Activated CD4-positive, alpha-beta T cell treated with anti-CD3 and anti-CD28 coated beads for 36 hours (primary cell): ENCODE measurements at regions of chr9 and their contacts with region 1.

Region 1: GRCh38 chr9:5450359-5451091 is at the start of gene CD274:
- DNase-seq: peak; percentile 94
- ATAC-seq: peak; percentile 66
- H3K4me3 Mint-ChIP-seq: peak within 1 kb of the TSS; percentile 98
- H3K27ac Mint-ChIP-seq: peak within 1 kb of the TSS; percentile 90
- H3K4me1 Mint-ChIP-seq: peaks cover 77% of the 10 kb centered on the region
- H3K27me3 Mint-ChIP-seq: no peaks in the 10 kb centered on the region
- total RNA-seq, gene CD274: 25.0 to 30.1 TPM

Region 2: GRCh38 chr9:4832786-4833579 is 617.5 kb before region 1 on chr9:
- CTCF ChIA-PET with region 1: no interaction called
- POLR2A ChIA-PET with region 1: no interaction called
- intact Hi-C with region 1: loop called in 1 of 2 experiments (anchors 2 kb)
- DNase-seq: peak; percentile 81
- ATAC-seq: peak; percentile 94
- H3K4me3 Mint-ChIP-seq: peak overlapping the region; percentile 16
- H3K27ac Mint-ChIP-seq: peak overlapping the region; percentile 84
- H3K4me1 Mint-ChIP-seq: peaks cover 45% of the 10 kb centered on the region
- H3K27me3 Mint-ChIP-seq: no peaks in the 10 kb centered on the region

Region 3: GRCh38 chr9:5364294-5365024 is 86.1 kb before region 1 on chr9:
- CTCF ChIA-PET with region 1: no interaction called
- POLR2A ChIA-PET with region 1: no interaction called
- intact Hi-C with region 1: no loop called
- DNase-seq: no peak
- ATAC-seq: peak; percentile 97
- H3K4me3 Mint-ChIP-seq: no peak overlapping the region
- H3K27ac Mint-ChIP-seq: peak overlapping the region; percentile 44
- H3K4me1 Mint-ChIP-seq: peaks cover 17% of the 10 kb centered on the region
- H3K27me3 Mint-ChIP-seq: no peaks in the 10 kb centered on the region

Region 4: GRCh38 chr9:5510360-5510931 is 59.9 kb after region 1 on chr9 and contains the start of gene PDCD1LG2:
- CTCF ChIA-PET with region 1: interaction called, 4 read pairs
- POLR2A ChIA-PET with region 1: no interaction called
- intact Hi-C with region 1: loop called in 1 of 2 experiments (anchors 2 kb)
- DNase-seq: peak; percentile 78
- ATAC-seq: peak; percentile 92
- H3K4me3 Mint-ChIP-seq: peak within 1 kb of the TSS; percentile 64
- H3K27ac Mint-ChIP-seq: peak within 1 kb of the TSS; percentile 89
- H3K4me1 Mint-ChIP-seq: peaks cover 50% of the 10 kb centered on the region
- H3K27me3 Mint-ChIP-seq: no peaks in the 10 kb centered on the region
- total RNA-seq, gene PDCD1LG2: 0.43 to 0.81 TPM

Region 5: DNA sequence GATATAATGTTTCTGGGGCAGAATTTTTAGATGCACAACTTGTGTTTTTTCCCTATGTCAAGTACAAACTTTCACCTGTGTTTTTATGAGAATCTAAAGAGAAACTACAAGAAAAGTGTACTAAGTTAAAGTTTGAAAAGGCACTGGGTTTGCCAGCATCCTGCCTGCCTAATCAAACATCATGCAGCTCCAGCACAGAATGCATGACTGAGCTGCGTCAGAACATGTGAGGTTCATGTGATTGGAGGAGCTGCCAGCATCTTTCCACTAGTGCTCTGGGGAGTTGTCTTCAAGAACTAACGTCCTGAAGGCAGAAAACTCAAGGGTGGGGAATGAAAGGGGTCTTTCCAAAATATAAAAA is 132.3 kb after region 1 on chr9:
- CTCF ChIA-PET with region 1: interaction called, 18 read pairs
- POLR2A ChIA-PET with region 1: interaction called, 4 read pairs
- intact Hi-C with region 1: loop called in 1 of 2 experiments (anchors 2 kb)
- DNase-seq: peak; percentile 69
- ATAC-seq: peak; percentile 42
- H3K4me3 Mint-ChIP-seq: no peak overlapping the region
- H3K27ac Mint-ChIP-seq: peak overlapping the region; percentile 85
- H3K4me1 Mint-ChIP-seq: peaks cover 74% of the 10 kb centered on the region
- H3K27me3 Mint-ChIP-seq: no peaks in the 10 kb centered on the region

Region 6: GRCh38 chr9:5843794-5844504 is 393.4 kb after region 1 on chr9:
- CTCF ChIA-PET with region 1: no interaction called
- POLR2A ChIA-PET with region 1: no interaction called
- intact Hi-C with region 1: loop called (anchors 5 to 10 kb)
- DNase-seq: no peak
- ATAC-seq: no peak
- H3K4me3 Mint-ChIP-seq: peak overlapping the region; percentile 26
- H3K27ac Mint-ChIP-seq: peak overlapping the region; percentile 45
- H3K4me1 Mint-ChIP-seq: peaks cover 58% of the 10 kb centered on the region
- H3K27me3 Mint-ChIP-seq: no peaks in the 10 kb centered on the region

Region 7: GRCh38 chr9:5851445-5851844 is 400.9 kb after region 1 on chr9:
- CTCF ChIA-PET with region 1: no interaction called
- POLR2A ChIA-PET with region 1: no interaction called
- intact Hi-C with region 1: loop called (anchors 5 to 10 kb)
- DNase-seq: peak; percentile 65
- ATAC-seq: peak; percentile 87
- H3K4me3 Mint-ChIP-seq: no peak overlapping the region
- H3K27ac Mint-ChIP-seq: peak overlapping the region; percentile 44
- H3K4me1 Mint-ChIP-seq: peaks cover 42% of the 10 kb centered on the region
- H3K27me3 Mint-ChIP-seq: no peaks in the 10 kb centered on the region